Testis (tissue), 5 donors: ENCODE measurements at regions of chr3 and their contacts with region 1.

Region 1: DNA sequence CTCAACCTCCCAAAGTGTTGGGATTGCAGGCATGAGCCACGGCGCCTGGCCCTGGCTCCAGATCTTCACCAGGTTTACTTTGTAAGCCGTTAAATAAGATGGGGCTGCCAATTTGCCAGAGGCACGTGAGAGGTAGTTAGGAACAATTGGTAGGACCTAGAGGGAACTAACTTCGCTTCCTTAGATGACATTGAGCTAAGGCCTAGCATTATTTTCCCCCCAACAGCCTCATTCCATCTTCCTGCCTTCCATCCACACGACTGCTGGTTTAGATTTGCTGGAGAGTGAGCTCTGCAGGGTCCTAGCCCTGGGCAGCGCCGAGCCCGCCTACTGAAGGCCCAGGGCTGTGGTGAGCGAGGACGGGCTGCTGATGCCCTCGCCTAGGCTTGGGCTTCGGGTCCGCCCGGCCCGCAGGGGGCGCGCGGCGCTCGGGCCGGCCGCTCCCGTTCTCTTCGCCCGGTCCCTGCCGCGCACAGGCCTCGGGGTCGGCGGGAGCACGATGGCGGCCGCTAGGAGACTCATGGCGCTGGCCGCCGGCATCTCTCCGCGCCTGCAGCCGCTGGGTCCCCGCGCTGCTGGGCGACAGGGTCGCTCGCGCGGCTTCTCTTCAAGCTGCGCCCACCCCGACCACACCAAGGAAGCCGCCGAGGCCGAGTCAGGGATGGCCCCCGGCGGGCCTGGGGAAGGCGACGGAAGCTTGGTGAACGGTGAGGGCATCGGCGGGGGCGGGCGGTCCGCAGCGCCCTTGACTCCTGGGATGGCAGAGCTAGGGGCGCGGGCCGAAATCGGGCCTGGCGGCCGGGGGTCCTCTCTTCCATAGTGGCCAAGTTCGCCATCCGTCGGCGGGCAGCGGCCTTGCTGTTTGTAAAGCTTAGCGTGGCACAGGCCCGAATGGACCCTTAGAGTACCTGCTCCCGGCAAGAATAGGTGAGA is 21.9 kb downstream of the DHX30 start:
- DNase-seq: peak; percentile 84
- H3K4me3 ChIP-seq: peak overlapping the region; percentile 94 to 97
- H3K27ac ChIP-seq: peak overlapping the region; percentile 76 to 87
- H3K4me1 ChIP-seq: peaks cover 11% of the 10 kb centered on the region
- H3K27me3 ChIP-seq: no peaks in the 10 kb centered on the region
- CTCF ChIP-seq: peak; percentile 76 to 87 (median 82)
- POLR2A ChIP-seq: no peak

Region 2: GRCh38 chr3:47989981-47990440 is 165.2 kb after region 1 on chr3:
- intact Hi-C with region 1: loop called (anchors 10 kb)
- DNase-seq: peak; percentile 89
- H3K4me3 ChIP-seq: no peak overlapping the region
- H3K27ac ChIP-seq: peak overlapping the region in 1 of 2 donors; percentile 25
- H3K4me1 ChIP-seq: peaks cover 4% of the 10 kb centered on the region
- H3K27me3 ChIP-seq: no peaks in the 10 kb centered on the region
- CTCF ChIP-seq: peak; percentile 85 to 90 (median 89)
- POLR2A ChIP-seq: no peak

Region 3: DNA sequence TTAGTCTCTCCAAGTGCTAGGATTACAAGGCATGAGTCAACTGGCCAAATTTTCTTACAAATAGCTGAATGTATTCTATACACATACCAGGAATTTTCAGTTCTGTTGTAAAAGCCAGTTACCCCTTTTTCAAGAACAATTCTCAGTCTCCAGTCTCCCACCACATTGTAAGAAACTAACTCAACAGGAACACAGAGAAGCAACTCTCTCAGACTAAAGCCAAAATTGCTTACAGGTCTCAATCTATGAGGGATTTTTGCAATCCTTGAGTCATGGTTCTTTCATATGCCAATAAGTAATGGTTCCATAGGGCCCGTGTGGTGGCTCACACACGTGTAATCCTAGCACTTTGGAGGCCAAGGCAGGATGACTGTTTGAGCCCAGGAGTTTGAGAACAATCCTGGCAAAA is 883.7 kb after region 1 on chr3:
- intact Hi-C with region 1: no loop called
- DNase-seq: no peak
- H3K4me3 ChIP-seq: no peak overlapping the region
- H3K27ac ChIP-seq: no peak overlapping the region
- H3K4me1 ChIP-seq: peaks cover 23% of the 10 kb centered on the region
- H3K27me3 ChIP-seq: no peaks in the 10 kb centered on the region
- CTCF ChIP-seq: no peak
- POLR2A ChIP-seq: no peak